Sciatic nerve (tissue), 2 donors: ENCODE measurements at regions of chr13 and their contacts with region 1.

Region 1: GRCh38 chr13:50299546-50300249 is 284.5 kb downstream of the KCNRG start:
- DNase-seq: no peak
- ATAC-seq: no peak

Region 2: GRCh38 chr13:50866817-50867636 is 567.3 kb after region 1 on chr13:
- intact Hi-C with region 1: no loop called
- DNase-seq: no peak
- ATAC-seq: no peak

Region 3: GRCh38 chr13:51619614-51620013 is 1319.9 kb after region 1 on chr13:
- intact Hi-C with region 1: loop called (anchors 5 kb)
- DNase-seq: no peak
- ATAC-seq: peak; percentile 39